ENCODE measurements at regions of chr10 and their contacts with region 1.

Region 1: DNA sequence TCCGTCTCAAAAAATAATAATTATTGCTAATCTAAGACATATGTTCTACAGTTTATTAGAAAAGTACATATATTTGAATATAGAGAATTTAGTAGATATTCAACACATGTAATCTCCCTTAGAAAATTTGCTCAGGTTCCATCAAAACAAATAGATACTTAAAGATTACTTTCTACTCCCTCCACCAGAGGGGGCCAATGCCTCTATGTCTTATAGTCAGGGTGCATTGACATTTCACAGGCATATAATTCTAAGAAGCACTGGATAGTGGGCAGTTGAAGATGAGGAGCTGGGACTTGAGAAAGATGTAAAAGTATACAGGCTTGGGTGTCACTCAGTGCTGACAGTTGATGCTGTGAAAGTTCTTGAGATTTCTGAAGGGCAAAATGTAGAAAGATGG is 301.6 kb upstream of the HPS1 start:
- DNase-seq: peak; percentile 8
- ATAC-seq: no peak
- H3K4me3 Mint-ChIP-seq: no peak overlapping the region
- H3K27ac Mint-ChIP-seq: no peak overlapping the region
- H3K4me1 Mint-ChIP-seq: no peaks in the 10 kb centered on the region
- H3K27me3 Mint-ChIP-seq: peaks cover 6% of the 10 kb centered on the region

Region 2: DNA sequence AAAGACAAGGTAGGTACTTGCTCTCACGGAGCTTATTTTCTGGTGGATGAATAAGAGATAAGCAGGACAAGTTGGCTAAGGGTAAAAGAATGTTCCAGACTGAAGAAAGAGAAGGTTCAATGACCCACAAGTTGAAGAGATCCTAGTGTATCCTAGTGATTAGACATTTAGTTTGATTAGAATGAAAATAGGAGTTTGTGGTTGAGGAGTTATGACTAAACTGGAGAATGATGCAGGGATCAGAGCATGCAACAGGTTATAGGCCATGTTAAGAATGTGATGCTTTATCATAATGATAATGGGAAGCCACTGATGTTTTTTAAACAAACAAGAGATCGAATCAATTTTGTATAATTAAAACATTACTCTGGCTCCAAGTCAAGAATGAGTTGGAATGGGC is 130.1 kb after region 1 on chr10:
- CTCF ChIA-PET with region 1: no interaction called
- POLR2A ChIA-PET with region 1: no interaction called
- intact Hi-C with region 1: no loop called
- DNase-seq: no peak
- ATAC-seq: no peak
- H3K4me3 Mint-ChIP-seq: no peak overlapping the region
- H3K27ac Mint-ChIP-seq: no peak overlapping the region
- H3K4me1 Mint-ChIP-seq: no peaks in the 10 kb centered on the region
- H3K27me3 Mint-ChIP-seq: peaks cover 7% of the 10 kb centered on the region

Region 3: GRCh38 chr10:98980353-98980752 is 232.1 kb after region 1 on chr10:
- CTCF ChIA-PET with region 1: no interaction called
- POLR2A ChIA-PET with region 1: no interaction called
- intact Hi-C with region 1: no loop called
- DNase-seq: no peak
- ATAC-seq: no peak
- H3K4me3 Mint-ChIP-seq: no peak overlapping the region
- H3K27ac Mint-ChIP-seq: no peak overlapping the region
- H3K4me1 Mint-ChIP-seq: no peaks in the 10 kb centered on the region
- H3K27me3 Mint-ChIP-seq: no peaks in the 10 kb centered on the region

Region 4: DNA sequence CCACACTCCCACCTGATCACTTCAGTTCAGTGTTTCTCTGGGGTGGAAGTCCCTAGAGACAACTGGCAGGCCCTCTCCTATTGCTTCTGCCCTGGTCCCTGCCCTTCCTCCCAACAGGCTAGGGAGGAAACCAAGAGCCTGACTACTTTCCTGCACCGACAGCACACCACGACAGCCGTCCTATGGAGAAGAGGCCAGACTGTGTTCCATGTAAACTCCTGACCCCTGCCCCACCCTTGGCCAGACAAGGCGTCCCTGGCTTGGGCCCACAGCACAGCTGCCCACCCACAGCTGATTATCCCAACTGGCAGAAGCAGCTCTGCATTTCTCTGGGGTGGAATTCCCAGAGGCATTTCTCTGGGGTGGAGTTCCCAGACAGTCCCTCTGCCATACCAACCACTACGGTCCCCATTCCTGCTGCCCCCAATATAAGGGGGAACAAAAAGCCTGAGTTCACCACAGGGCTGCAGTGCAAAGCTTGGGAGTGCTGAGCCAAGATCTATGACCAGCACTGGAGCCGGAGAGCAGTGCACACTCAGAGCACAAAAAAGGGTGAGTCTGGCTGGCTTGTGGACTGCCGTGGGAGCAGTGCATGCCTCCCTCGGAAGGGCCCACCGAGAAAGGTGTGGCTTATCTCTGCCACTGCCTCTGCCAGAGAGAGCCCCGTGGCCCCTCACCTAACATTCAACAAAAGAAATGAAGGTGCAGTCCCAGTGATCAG is 293.9 kb after region 1 on chr10:
- CTCF ChIA-PET with region 1: no interaction called
- POLR2A ChIA-PET with region 1: no interaction called
- intact Hi-C with region 1: loop called in 1 of 2 experiments (anchors 10 kb)
- DNase-seq: no peak
- ATAC-seq: no peak
- H3K4me3 Mint-ChIP-seq: no peak overlapping the region
- H3K27ac Mint-ChIP-seq: no peak overlapping the region
- H3K4me1 Mint-ChIP-seq: no peaks in the 10 kb centered on the region
- H3K27me3 Mint-ChIP-seq: no peaks in the 10 kb centered on the region

Region 5: DNA sequence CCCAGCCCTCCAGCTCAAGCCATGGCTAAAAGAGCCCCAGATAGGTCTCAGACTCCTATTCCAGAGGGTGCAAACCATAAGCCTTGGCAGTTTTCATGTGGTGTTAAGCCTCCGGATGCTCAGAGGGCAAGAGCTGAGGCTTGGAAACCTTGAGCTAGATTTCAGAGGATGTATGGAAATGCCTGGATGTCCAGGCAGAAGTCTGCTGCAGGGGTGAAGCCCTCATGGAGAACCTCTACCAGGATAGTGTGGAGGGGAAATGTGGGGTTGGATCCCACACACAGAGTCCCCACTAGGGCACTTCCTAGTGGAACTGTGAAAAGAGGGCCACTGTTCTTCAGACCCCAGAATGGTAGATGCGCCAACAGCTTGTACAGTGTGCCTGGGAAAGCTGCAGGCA is 500.5 kb after region 1 on chr10:
- CTCF ChIA-PET with region 1: no interaction called
- POLR2A ChIA-PET with region 1: no interaction called
- intact Hi-C with region 1: loop called (anchors 2 to 5 kb)
- DNase-seq: no peak
- ATAC-seq: no peak
- H3K4me3 Mint-ChIP-seq: no peak overlapping the region
- H3K27ac Mint-ChIP-seq: no peak overlapping the region
- H3K4me1 Mint-ChIP-seq: no peaks in the 10 kb centered on the region
- H3K27me3 Mint-ChIP-seq: peaks cover 31% of the 10 kb centered on the region

Measured in activated CD4-positive, alpha-beta T cell treated with anti-CD3 and anti-CD28 coated beads for 36 hours (primary cell).